MCF 10A (cell line): ENCODE measurements at regions of chr6 and their contacts with region 1.

Region 1: GRCh38 chr6:108592371-108593337 is 31.9 kb downstream of the FOXO3 start:
- DNase-seq: peak; percentile 77
- H3K4me3 Mint-ChIP-seq: peak overlapping the region; percentile 39
- H3K27ac Mint-ChIP-seq: peak overlapping the region; percentile 87
- H3K4me1 Mint-ChIP-seq: peaks cover 69% of the 10 kb centered on the region
- H3K27me3 Mint-ChIP-seq: no peaks in the 10 kb centered on the region
- CTCF ChIP-seq: no peak

Region 2: DNA sequence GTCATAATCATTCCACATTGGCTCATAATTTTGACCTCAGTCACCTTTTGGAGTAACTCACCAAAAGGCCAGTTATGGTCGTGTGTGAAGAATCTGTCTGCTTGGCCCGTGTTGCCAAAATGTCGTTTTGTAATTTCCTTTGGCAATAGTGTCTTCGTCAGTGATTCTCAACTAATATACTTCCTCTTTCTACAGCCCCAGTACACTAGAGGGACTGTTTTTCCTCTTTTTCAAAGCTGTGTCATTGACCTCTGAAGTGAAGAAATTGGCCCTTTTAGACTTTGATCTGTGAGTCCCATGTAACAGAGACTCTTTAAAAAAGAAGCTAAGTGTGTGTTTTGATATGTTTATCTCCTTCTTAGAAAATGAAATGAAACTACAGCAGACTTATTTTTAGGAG is 26.8 kb before region 1 on chr6:
- CTCF ChIA-PET with region 1: interaction called, 4 read pairs
- POLR2A ChIA-PET with region 1: interaction called, 164 read pairs
- intact Hi-C with region 1: no loop called
- DNase-seq: peak; percentile 92
- H3K4me3 Mint-ChIP-seq: peak overlapping the region; percentile 90
- H3K27ac Mint-ChIP-seq: peak overlapping the region; percentile 83
- H3K4me1 Mint-ChIP-seq: peaks cover 29% of the 10 kb centered on the region
- H3K27me3 Mint-ChIP-seq: no peaks in the 10 kb centered on the region
- CTCF ChIP-seq: no peak

Region 3: DNA sequence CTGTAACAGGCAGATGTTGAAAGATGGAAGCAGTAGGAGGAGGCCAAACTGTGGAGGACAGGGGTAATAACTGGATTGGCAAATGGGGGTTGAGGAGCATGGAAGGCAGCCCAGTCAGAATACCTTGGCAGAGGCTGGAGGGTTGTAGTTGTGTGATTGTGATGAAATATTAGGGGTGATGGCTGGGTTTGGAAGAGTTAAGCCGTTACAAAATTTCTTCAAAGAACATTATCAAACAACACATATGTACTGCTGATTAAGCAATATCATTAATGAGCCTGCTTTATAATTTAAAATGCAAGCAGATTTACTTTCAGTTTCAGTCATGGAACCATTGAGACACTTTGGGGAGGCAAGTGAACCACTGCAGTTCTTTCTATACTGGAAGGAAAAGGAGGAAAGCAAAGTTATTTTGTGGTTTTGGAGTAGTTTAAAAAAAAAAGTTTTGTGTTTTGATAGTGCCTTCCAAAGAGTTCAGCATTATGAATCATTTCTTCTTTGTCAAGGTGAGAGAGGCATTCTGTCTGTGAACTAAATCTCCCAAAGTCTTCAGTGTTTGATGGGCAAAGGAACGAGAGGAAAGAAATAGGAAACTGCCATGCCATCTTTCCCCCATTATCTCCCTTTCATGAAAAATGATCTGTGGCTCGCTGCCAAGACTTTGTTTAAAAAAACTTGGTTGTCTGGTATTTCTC is 11.3 kb before region 1 on chr6:
- CTCF ChIA-PET with region 1: interaction called, 4 read pairs
- POLR2A ChIA-PET with region 1: interaction called, 40 read pairs
- intact Hi-C with region 1: no loop called
- DNase-seq: peak; percentile 96
- H3K4me3 Mint-ChIP-seq: peak overlapping the region; percentile 67
- H3K27ac Mint-ChIP-seq: peak overlapping the region; percentile 50
- H3K4me1 Mint-ChIP-seq: peaks cover 76% of the 10 kb centered on the region
- H3K27me3 Mint-ChIP-seq: no peaks in the 10 kb centered on the region
- CTCF ChIP-seq: no peak

Region 4: GRCh38 chr6:108622641-108623298 is 30.1 kb after region 1 on chr6:
- CTCF ChIA-PET with region 1: interaction called, 4 read pairs
- POLR2A ChIA-PET with region 1: interaction called, 21 read pairs
- intact Hi-C with region 1: loop called (anchors 5 kb)
- DNase-seq: peak; percentile 77
- H3K4me3 Mint-ChIP-seq: peak overlapping the region; percentile 38
- H3K27ac Mint-ChIP-seq: peak overlapping the region; percentile 77
- H3K4me1 Mint-ChIP-seq: peaks cover 76% of the 10 kb centered on the region
- H3K27me3 Mint-ChIP-seq: no peaks in the 10 kb centered on the region
- CTCF ChIP-seq: no peak

Region 5: GRCh38 chr6:108661430-108661829 is 68.8 kb after region 1 on chr6:
- CTCF ChIA-PET with region 1: no interaction called
- POLR2A ChIA-PET with region 1: interaction called, 3 read pairs
- intact Hi-C with region 1: loop called (anchors 2 kb)
- DNase-seq: peak; percentile 32
- H3K4me3 Mint-ChIP-seq: no peak overlapping the region
- H3K27ac Mint-ChIP-seq: no peak overlapping the region
- H3K4me1 Mint-ChIP-seq: peaks cover 36% of the 10 kb centered on the region
- H3K27me3 Mint-ChIP-seq: no peaks in the 10 kb centered on the region
- CTCF ChIP-seq: no peak

Region 6: DNA sequence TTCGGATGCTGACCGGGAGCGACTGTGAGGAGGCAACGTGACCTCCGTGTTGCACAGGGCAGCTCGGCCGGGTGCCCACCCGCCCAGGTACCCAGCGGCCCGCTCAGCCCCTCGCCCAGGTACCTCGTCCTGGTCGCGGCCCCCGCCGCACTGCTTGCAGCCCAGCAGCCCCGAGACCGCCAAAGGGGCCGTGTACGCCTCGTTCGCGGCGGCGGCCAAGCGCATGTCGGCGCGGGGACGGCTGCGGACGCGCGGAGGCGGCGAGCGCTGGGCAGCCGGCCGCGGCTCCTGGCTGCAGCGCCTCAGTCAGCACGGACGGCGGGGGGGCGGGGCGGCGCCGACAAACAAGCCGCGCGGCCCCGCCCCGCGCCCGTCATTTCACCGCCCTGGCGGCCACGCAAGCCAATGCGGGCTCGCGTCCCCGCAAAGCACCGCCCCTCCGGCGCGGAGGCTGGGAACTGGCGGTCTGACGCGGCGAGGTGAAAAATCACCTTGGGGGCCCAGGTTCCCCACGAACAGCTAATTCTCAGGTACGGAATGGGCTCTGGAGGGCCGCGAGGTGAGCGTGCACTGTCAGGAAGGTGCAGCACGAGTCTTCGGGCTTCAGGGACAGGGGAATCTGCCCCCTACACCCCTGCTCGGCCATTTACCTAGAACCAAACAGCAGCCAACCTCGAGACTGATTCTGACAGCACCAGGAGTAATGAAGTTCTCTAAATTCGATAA is 416.7 kb after region 1 on chr6:
- CTCF ChIA-PET with region 1: no interaction called
- POLR2A ChIA-PET with region 1: interaction called, 14 read pairs
- intact Hi-C with region 1: no loop called
- DNase-seq: peak; percentile 89
- H3K4me3 Mint-ChIP-seq: peak overlapping the region; percentile 93
- H3K27ac Mint-ChIP-seq: peak overlapping the region; percentile 94
- H3K4me1 Mint-ChIP-seq: peaks cover 24% of the 10 kb centered on the region
- H3K27me3 Mint-ChIP-seq: no peaks in the 10 kb centered on the region
- CTCF ChIP-seq: no peak